Activated T-helper 1 cell treated with anti-CD3 and anti-CD28 coated beads, Interleukin-12 subunit alpha, Interleukin-12 subunit beta, Interleukin-2, Interleukin-4 antibody, amounts not matched to agents 30 ng/mL and 10 ng/mL and 1 ng/mL, durations not matched to agents 14 hours and 24 hours and 36 hours (primary cell): ENCODE measurements at regions of chr7 and their contacts with region 1.

Region 1: GRCh38 chr7:35906191-35906908 is 105.5 kb downstream of the SEPTIN7 start:
- DNase-seq: peak; percentile 43
- H3K4me3 Mint-ChIP-seq: no peak overlapping the region
- H3K27ac Mint-ChIP-seq: no peak overlapping the region
- H3K4me1 Mint-ChIP-seq: peaks cover 6% of the 10 kb centered on the region
- H3K27me3 Mint-ChIP-seq: no peaks in the 10 kb centered on the region

Region 2: DNA sequence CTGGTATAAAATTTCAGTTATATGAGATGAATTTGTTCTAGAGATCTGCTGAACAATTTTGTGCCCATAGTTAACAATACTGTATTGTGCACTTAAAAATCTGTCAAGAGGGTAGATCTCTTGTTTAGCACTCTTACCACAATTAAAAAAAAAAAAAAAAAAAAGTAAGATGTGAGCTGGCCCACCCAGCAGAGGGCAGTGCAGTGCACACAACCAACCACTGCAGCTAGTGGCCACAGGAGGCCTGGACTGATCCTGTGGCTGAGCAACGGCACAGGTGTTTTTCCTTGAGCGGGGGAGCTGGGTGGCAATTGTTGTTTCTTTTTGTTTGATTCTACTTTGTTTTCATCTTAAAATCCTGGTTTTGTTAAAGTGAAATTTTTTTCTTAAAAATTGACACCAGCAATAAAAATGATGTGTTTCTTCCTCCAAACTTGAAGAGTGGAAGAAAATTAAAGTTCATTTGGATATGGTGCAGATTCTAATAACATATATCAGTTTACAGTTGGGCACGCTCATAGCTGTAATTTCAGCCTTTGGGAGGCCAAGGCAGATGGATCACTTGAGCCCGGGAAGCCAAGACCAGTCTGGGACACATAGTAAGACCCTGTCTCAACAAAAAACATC is 481.4 kb before region 1 on chr7:
- intact Hi-C with region 1: loop called (anchors 5 kb)
- DNase-seq: peak; percentile 17
- H3K4me3 Mint-ChIP-seq: no peak overlapping the region
- H3K27ac Mint-ChIP-seq: no peak overlapping the region
- H3K4me1 Mint-ChIP-seq: no peaks in the 10 kb centered on the region
- H3K27me3 Mint-ChIP-seq: peaks cover 12% of the 10 kb centered on the region

Region 3: DNA sequence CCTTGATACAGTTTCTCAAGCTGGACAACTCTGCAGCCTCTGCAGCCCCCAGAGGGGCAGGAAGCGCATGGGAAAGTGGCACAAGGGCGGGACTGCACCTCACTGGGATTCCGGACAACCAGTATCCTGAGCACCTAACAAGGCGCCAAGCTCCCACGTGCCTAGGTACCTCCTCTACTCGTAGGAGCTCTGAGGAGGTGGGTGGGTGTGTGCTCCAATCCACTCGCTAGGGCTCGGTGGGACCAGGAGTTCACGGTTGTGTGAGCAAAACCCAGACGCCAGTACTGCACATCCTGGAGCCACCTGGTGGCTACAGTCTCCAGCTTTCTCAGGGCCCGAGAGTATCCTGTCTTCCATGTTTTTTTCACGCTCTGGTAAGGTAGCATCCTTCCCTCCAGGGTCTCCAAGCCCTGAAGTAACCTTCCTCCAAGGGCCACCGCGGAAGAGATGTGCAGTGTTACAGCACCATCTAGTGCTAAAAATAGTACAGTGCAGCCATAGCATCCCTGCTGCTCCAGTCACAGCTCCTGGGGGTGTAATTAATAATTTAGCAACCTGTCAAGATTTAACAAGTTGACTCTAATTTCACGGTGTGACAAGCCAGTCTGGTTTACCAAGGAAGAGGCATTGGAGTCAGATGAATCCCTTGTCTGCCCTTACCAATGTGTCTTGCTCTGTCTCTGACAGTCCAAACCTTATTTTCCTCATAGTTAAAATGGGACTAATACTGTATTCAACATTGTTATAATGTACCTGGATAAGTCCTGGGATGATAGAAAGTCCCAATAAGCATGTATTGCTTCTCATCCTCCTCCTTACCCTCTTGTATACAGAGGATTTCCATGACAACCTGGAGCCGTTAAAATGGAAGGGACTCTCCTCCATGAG is 281.8 kb before region 1 on chr7:
- intact Hi-C with region 1: loop called (anchors 1 kb)
- DNase-seq: peak; percentile 6
- H3K4me3 Mint-ChIP-seq: no peak overlapping the region
- H3K27ac Mint-ChIP-seq: no peak overlapping the region
- H3K4me1 Mint-ChIP-seq: no peaks in the 10 kb centered on the region
- H3K27me3 Mint-ChIP-seq: peaks cover 5% of the 10 kb centered on the region